CD4-positive, alpha-beta memory T cell (primary cell): ENCODE measurements at regions of chr6 and their contacts with region 1.

Region 1: DNA sequence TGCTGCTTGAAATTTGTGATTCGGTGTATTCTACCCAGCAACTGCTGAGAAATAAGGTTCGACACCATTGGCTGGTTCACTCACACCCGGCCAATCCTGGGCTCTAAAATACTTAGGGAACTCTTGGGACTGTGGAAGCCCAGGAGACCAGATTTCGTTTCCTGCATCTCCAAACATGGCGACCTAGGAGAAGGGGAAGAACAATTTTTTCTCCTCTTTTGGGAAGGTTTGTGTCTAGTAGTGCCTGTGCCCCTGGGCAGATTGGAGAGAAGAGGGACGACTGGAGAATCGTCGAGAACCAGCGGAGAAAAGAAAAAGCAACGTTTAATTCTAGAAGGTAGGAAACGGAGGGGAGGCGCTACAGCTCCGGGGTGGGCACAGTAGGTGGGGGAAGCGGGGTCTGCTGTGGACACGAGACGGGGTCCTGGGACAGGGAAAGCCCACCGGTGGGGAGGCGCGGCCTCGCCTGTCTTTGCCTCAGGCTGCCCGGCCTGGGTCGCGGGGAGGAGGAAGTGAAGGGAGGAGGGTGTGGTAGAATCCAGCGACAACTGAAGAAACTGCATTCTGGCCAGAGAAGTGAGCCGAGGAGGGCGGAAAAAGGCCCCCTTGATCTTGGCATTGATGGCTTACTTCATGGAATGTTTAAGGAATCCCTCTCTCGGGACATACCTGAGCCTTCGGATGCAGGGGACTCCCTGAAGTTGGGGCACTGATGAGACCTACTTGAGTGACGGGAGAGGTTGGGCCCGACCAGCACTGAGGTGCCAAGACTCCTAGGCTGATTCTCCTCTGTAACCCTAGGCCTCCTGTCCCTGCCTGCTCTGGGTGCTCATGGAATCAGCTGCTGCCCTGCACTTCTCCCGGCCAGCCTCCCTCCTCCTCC is at the start of gene BTN2A1:
- DNase-seq: peak; percentile 76 to 86 (median 78)
- H3K4me3 ChIP-seq: peak within 1 kb of the TSS; percentile 90 to 95
- H3K4me3 Mint-ChIP-seq: peak within 1 kb of the TSS; percentile 96 to 100 (median 98)
- H3K27ac ChIP-seq: peak within 1 kb of the TSS; percentile 85
- H3K27ac Mint-ChIP-seq: peak within 1 kb of the TSS; percentile 91 to 99 (median 98)
- H3K4me1 ChIP-seq: peaks cover 47% of the 10 kb centered on the region
- H3K4me1 Mint-ChIP-seq: peaks cover 45 to 73% (median 57%) of the 10 kb centered on the region in 4 donors
- H3K27me3 ChIP-seq: no peaks in the 10 kb centered on the region
- H3K27me3 Mint-ChIP-seq: no peaks in the 10 kb centered on the region
- total RNA-seq, gene BTN2A1: 57.0 to 62.8 TPM

Region 2: DNA sequence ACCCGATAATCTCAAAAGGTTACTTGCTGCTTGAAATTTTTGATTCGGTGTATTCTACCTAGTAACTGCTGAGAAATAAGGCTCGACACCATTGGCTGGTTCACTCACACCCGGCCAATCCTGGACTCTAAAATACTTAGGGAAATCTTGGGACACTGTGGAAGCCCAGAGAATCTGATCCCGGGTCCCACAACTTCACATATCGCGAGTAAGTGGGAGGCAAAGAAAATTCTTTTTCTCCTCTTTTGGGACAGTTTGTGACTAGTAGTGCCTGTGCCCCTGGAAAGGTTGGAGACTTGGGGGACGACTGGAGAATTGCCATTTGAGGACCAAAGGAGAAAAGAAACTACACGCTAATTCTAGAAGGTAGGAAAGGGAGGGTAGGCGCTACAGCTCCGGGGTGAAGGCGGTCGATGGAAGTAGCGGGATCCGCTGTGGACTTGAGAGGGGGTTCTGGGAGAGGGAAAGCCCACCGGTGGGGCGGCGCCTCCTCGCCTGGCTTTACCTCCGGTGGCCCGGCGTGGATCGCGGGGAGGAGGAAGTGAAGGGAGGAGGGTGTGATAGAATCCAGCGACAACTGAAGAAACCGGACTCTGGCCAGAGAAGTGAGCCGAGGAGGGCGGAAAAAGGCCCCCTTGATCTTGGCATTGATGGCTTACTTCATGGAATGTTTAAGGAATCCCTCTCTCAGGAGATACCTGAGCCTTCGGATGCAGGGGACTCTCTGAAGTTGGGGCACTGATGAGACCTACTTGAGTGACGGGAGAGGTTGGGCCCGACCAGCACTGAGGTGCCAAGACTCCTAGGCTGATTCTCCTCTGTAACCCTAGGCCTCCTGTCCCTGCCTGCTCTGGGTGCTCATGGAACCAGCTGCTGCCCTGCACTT is 36.5 kb before region 1 on chr6:
- CTCF ChIA-PET with region 1: interaction called, 3 read pairs
- POLR2A ChIA-PET with region 1: no interaction called
- intact Hi-C with region 1: loop called (anchors 2 kb)
- DNase-seq: peak; percentile 63 to 69 (median 67)
- H3K4me3 ChIP-seq: peak overlapping the region; percentile 86 to 97
- H3K4me3 Mint-ChIP-seq: no peak overlapping the region
- H3K27ac ChIP-seq: peak overlapping the region; percentile 65
- H3K27ac Mint-ChIP-seq: peak overlapping the region in 1 of 7 donors; percentile 90
- H3K4me1 ChIP-seq: peaks cover 10% of the 10 kb centered on the region
- H3K4me1 Mint-ChIP-seq: peaks cover 2 to 12% (median 5%) of the 10 kb centered on the region in 4 donors
- H3K27me3 ChIP-seq: no peaks in the 10 kb centered on the region
- H3K27me3 Mint-ChIP-seq: no peaks in the 10 kb centered on the region

Region 3: DNA sequence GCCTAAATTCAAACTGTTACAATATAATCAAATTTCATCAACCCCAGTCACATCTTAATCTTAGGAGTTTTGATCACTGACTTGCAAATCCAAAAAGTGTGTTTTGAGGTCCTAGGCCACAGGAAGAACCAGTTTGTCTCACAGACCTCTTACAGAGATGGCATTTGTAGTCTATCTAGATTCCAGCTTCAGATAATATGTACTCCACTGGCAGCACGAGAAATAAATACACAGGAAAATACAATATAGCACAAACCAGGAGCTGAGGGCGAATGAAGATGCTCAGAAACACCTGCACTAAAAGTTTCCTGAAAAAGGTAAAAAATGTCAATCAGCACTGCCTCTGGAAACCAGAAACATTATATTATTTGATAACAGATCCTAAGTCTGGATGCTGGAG is 18.4 kb before region 1 on chr6:
- CTCF ChIA-PET with region 1: interaction called, 3 read pairs
- POLR2A ChIA-PET with region 1: interaction called, 8 read pairs
- intact Hi-C with region 1: loop called (anchors 1 kb)
- DNase-seq: peak in 1 of 5 donors; percentile 31
- H3K4me3 ChIP-seq: peak overlapping the region in 1 of 2 donors; percentile 95
- H3K4me3 Mint-ChIP-seq: peak overlapping the region; percentile 93 to 100 (median 98)
- H3K27ac ChIP-seq: peak overlapping the region; percentile 97
- H3K27ac Mint-ChIP-seq: peak overlapping the region; percentile 97 to 100 (median 99)
- H3K4me1 ChIP-seq: peaks cover 37% of the 10 kb centered on the region
- H3K4me1 Mint-ChIP-seq: peaks cover 23 to 55% (median 45%) of the 10 kb centered on the region in 4 donors
- H3K27me3 ChIP-seq: no peaks in the 10 kb centered on the region
- H3K27me3 Mint-ChIP-seq: no peaks in the 10 kb centered on the region